ENCODE measurements at regions of chr3 and their contacts with region 1.

Region 1: GRCh38 chr3:89280822-89281365 is 173.5 kb downstream of the EPHA3 start:
- DNase-seq: no peak
- H3K4me3 ChIP-seq: no peak overlapping the region
- H3K27ac ChIP-seq: no peak overlapping the region
- H3K4me1 ChIP-seq: no peaks in the 10 kb centered on the region
- H3K27me3 ChIP-seq: no peaks in the 10 kb centered on the region
- CTCF ChIP-seq: no peak

Region 2: GRCh38 chr3:87380761-87381160 is 1900.1 kb before region 1 on chr3:
- intact Hi-C with region 1: loop called (anchors 5 kb)
- DNase-seq: no peak
- H3K4me3 ChIP-seq: no peak overlapping the region
- H3K27ac ChIP-seq: no peak overlapping the region
- H3K4me1 ChIP-seq: no peaks in the 10 kb centered on the region
- H3K27me3 ChIP-seq: no peaks in the 10 kb centered on the region
- CTCF ChIP-seq: no peak